ENCODE measurements at regions of chr12 and their contacts with region 1.

Region 1: DNA sequence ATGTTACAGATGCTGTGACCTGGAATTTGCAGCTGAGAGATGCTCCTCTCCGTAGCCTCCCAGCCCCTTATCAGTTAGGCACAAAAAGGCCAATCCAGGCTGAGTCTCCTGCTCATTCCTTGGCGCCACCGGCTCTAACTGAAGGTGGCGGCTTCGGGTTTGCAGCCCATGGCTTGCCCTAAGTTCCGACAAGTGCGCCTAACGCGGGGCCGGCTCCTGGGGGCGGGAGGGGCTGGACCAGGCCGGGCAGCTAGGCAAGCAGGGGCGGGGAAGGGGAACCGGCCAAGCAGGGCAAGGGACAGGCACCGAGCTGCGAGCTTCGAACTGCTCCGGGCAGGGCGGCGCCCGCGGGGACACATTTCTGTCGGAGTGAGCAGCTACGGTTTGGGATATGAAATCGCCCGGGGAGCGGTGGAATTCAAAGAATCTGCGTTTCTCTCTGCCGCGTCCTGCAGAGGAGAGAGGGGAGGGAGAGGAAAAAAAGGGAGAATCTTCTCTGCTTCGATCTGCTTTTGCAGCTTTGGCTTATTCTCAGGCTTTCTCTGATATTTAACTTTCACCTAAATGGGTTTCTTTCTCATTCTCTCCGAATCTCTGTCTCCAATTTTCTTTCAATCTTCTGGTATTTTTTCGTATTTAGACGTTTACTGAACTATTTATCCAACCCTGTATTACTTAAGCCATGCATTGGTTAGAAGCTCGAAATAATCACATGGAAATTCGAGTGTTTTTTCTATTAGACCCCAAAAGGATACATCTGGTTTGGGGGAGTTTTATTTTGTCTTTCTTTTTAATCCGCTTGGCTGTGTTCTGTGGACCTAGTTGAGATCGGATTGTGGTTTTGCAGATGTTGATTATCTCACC is 1.6 kb upstream of the HOXC12 start:
- DNase-seq: no peak
- H3K4me3 ChIP-seq: no peak overlapping the region
- CTCF ChIP-seq: no peak
- POLR2A ChIP-seq: no peak

Region 2: DNA sequence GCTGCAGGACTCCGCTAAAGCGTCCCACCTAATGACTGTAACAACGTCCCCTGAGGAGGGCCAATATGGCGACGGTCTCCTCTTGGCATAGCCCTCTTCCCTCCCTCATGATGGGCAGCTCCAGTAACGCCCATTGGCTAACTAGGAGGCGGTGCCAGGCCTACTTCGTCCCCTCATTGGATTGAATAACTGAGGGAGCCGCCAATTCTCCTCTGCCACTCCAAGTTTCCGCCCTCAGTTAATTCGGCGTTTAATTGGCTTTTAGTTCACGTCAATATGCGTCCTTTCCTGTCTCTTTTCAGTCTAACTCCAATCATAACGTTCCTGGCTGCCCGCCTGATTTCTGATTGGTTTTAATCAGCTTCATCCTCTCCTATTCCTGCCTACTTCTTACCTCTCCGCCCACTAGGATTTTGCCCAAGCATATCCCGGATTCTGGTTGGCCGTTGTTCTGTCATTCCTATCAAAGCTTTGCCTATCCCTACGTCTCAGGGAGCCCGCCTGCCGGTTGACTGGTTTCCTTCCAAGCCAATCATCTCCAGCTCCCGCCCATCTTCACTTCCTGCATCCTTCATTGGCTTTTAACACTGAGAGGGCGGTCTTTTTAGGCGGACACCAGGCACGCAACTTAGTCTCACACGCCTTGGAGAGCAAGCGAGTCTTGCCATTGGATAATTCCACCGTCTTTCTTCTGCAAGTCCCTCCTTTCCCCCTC is 573.6 kb before region 1 on chr12:
- intact Hi-C with region 1: no loop called
- DNase-seq: peak; percentile 99 to 100
- H3K4me3 ChIP-seq: no peak overlapping the region
- CTCF ChIP-seq: no peak
- POLR2A ChIP-seq: peak in 1 of 2 donors; percentile 55

Region 3: DNA sequence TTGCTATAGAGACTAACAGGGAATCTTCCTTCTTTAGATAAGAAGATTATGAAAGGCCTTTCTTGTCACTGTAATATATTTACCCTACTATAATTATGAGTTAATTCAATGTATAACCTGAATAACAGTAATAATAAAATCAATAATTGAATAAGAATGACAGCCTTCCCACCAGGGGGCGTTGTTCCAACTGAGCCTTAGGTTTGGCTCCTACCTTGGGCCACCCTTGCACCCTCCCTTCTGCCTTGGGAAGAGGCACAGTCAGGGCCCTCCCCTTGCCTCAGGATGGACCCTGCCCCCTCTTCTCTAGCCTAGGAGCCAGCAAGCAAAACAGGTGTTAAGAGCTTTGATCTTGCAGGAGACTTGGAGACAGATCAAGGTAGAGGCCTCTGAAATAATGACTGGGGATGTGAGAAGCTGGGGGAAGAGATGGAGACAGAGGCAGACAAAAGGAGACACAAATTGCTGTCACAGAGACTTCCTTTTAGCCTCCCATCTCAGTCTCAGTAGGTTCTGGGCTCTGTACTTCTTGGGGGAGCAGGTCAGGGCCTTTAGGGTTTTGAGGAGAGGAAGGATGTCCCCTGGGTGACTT is 161.3 kb before region 1 on chr12:
- intact Hi-C with region 1: loop called (anchors 5 kb)
- DNase-seq: no peak
- H3K4me3 ChIP-seq: no peak overlapping the region
- CTCF ChIP-seq: no peak
- POLR2A ChIP-seq: no peak

Region 4: GRCh38 chr12:54164387-54165145 is 211.5 kb after region 1 on chr12:
- intact Hi-C with region 1: no loop called
- DNase-seq: no peak
- H3K4me3 ChIP-seq: no peak overlapping the region
- CTCF ChIP-seq: no peak
- POLR2A ChIP-seq: no peak

Region 5: GRCh38 chr12:54379401-54380201 is 426.5 kb after region 1 on chr12:
- intact Hi-C with region 1: no loop called
- DNase-seq: peak; percentile 86 to 98
- H3K4me3 ChIP-seq: no peak overlapping the region
- CTCF ChIP-seq: peak in 2 of 3 donors; percentile 6 to 99
- POLR2A ChIP-seq: no peak